ENCODE measurements at regions of chr3 and their contacts with region 1.

Region 1: GRCh38 chr3:27632431-27633223 is 89.5 kb downstream of the EOMES start:
- DNase-seq: peak; percentile 51
- H3K4me3 Mint-ChIP-seq: peak overlapping the region; percentile 81
- H3K27ac Mint-ChIP-seq: peak overlapping the region; percentile 89
- H3K4me1 Mint-ChIP-seq: peaks cover 50% of the 10 kb centered on the region
- H3K27me3 Mint-ChIP-seq: no peaks in the 10 kb centered on the region

Region 2: DNA sequence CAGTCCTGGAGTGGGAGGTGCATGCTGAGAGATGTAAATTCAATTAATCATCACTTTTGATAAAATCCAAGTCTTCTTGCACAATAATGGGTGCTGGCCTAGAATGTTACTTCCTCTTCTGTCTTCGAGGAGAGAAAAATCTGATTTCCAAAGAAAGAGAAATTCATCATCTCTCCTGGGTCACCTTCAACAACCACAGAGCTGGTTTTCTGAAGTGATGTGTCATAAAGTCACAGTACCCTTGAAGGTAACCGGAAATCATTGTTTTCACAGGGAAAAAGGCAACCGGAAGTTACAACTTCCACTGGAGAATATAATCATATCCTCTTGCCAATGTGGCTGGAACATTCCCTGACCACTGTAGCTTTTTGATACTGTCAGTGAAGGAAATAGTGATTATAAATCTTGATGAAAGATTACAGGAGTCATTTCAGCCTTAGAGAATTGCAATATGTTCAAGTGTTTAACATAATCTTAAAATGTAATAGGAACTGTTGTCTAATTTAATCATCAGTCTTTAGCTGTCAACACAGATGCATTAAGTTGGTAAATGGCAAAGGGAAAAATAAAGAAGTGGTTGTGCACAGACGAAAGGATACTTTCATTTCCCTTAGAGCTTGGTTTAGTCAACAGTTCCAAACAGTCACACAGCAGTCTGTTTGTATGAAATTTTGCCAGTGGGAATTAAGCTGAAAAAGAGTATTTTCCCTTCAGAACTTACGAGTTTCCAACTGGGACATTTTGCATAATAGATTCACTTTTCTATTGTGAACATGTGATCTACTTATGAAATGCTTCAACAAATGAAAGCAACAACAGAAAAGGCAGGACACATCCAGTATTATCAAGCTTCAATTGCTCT is 42.0 kb before region 1 on chr3:
- CTCF ChIA-PET with region 1: interaction called, 5 read pairs
- POLR2A ChIA-PET with region 1: interaction called, 23 read pairs
- DNase-seq: no peak
- H3K4me3 Mint-ChIP-seq: no peak overlapping the region
- H3K27ac Mint-ChIP-seq: peak overlapping the region; percentile 86
- H3K4me1 Mint-ChIP-seq: peaks cover 38% of the 10 kb centered on the region
- H3K27me3 Mint-ChIP-seq: no peaks in the 10 kb centered on the region

Region 3: DNA sequence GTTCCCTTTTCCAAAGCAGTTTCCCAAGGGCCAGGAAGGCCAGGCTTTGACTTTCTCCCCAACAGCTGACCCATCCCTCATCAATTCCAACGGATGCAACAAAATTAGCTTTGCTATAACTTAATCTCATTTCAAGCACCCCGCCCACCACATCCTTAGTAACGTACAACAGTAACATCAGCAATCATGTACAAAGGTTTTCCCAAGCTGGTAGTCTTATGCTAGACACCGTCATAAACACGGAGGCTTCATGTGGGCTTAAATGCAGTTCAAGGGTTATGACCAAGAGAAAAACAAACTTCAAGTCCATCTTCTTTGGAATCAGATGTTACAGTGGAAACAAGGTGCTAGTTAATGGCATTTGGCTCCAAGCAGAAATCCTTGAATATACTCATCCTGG is 22.9 kb after region 1 on chr3:
- CTCF ChIA-PET with region 1: no interaction called
- POLR2A ChIA-PET with region 1: no interaction called
- DNase-seq: no peak
- H3K4me3 Mint-ChIP-seq: no peak overlapping the region
- H3K27ac Mint-ChIP-seq: no peak overlapping the region
- H3K4me1 Mint-ChIP-seq: peaks cover 11% of the 10 kb centered on the region
- H3K27me3 Mint-ChIP-seq: no peaks in the 10 kb centered on the region